ENCODE measurements at regions of chr2 and their contacts with region 1.

Region 1: GRCh38 chr2:63588385-63589147 is at the starts of genes MDH1 and WDPCP:
- DNase-seq: peak; percentile 89 to 100
- ATAC-seq: peak; percentile 94 to 97
- H3K4me3 ChIP-seq: peak within 1 kb of the TSS; percentile 93
- H3K27ac ChIP-seq: peak within 1 kb of the TSS; percentile 78 to 92
- H3K4me1 ChIP-seq: peaks cover 24% of the 10 kb centered on the region
- CTCF ChIP-seq: no peak
- EP300 ChIP-seq: no peak
- POLR2A ChIP-seq: peak; percentile 74
- RAD21 ChIP-seq: no peak
- polyA plus RNA-seq, gene MDH1: 425 and 450 TPM in 2 replicates
- polyA plus RNA-seq, gene WDPCP: 6.8 and 7.6 TPM in 2 replicates

Region 2: DNA sequence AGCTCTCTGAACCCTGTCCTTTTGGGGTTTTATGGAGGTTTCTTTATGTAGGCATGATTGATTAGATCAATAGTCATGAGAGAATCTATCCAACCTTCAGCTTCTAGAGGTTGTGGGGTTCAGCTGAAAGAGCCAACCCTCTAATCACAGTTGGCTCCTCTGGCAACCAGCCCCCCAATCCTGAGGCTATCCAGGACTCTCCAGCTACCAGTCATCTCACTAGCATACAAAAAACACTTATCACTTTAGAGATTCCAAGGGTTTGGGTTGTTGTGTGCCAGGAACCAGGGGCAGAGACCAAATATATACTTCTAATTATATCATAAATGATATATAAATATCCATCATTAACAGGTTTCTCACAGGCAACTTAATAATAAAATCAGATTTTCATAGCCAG is 12.0 kb before region 1 on chr2:
- CTCF ChIA-PET with region 1: interaction called, 4 read pairs
- POLR2A ChIA-PET with region 1: interaction called, 17 read pairs
- DNase-seq: no peak
- ATAC-seq: no peak
- H3K4me3 ChIP-seq: no peak overlapping the region
- H3K27ac ChIP-seq: no peak overlapping the region
- H3K4me1 ChIP-seq: no peaks in the 10 kb centered on the region
- CTCF ChIP-seq: no peak
- EP300 ChIP-seq: no peak
- POLR2A ChIP-seq: no peak
- RAD21 ChIP-seq: no peak

Region 3: DNA sequence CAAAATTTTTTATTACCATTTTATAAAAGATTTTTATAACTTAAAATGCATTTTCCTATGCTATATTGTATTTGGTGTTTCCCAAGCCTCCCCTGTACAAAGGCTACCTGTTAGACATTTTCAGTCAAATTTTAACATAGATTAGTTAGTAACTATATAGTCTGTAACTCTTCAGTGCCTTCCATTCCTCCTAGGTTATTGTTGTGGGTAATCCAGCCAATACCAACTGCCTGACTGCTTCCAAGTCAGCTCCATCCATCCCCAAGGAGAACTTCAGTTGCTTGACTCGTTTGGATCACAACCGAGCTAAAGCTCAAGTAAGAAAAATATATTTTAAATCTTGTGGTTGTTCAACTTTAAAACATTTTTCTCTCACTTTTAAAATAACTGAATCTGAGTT is 10.4 kb after region 1 on chr2:
- CTCF ChIA-PET with region 1: interaction called, 3 read pairs
- POLR2A ChIA-PET with region 1: interaction called, 11 read pairs
- DNase-seq: no peak
- ATAC-seq: no peak
- H3K4me3 ChIP-seq: no peak overlapping the region
- H3K27ac ChIP-seq: no peak overlapping the region
- H3K4me1 ChIP-seq: no peaks in the 10 kb centered on the region
- CTCF ChIP-seq: no peak
- EP300 ChIP-seq: no peak
- POLR2A ChIP-seq: no peak
- RAD21 ChIP-seq: no peak

Measured in A549 (cell line).